ENCODE measurements at regions of chr1 and their contacts with region 1.

Region 1: DNA sequence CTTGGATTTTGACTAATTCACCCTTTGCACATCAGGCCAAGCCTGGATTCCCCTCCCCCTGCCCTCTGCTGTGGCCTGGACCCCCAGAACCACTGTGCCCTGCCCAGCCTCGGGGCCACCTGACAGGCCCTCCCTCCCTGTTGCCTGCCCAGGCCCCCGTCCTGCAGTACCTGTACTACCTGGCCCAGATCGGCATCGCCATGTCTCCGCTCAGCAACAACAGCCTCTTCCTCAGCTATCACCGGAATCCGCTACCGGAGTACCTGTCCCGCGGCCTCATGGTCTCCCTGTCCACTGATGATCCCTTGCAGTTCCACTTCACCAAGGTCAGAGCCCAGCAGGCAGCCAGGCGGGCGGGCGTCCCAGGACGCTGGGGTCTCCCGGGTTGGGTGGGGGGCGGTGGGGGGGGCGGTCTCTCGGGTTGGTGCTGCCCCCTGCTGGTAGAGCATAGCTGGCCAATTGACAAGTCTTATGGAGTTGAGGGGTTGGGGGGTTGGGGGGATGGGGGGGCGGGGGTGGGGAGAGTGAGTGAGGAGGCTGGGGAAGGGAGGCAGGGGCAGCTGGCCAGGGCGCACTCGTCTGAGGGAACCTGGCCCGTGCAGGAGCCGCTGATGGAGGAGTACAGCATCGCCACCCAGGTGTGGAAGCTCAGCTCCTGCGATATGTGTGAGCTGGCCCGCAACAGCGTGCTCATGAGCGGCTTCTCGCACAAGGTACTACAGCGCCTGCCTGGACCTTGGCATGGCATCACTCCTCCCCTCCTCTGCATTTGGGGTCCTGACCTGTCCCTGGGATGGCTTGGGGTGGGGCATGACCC is 10.7 kb downstream of the AMPD2 start:
- DNase-seq: peak; percentile 3
- H3K4me3 ChIP-seq: no peak overlapping the region
- H3K27ac ChIP-seq: no peak overlapping the region
- H3K4me1 ChIP-seq: peaks cover 14% of the 10 kb centered on the region
- H3K27me3 ChIP-seq: no peaks in the 10 kb centered on the region
- CTCF ChIP-seq: peak in 2 of 4 experiments; percentile 7 to 30
- POLR2A ChIP-seq: no peak

Region 2: DNA sequence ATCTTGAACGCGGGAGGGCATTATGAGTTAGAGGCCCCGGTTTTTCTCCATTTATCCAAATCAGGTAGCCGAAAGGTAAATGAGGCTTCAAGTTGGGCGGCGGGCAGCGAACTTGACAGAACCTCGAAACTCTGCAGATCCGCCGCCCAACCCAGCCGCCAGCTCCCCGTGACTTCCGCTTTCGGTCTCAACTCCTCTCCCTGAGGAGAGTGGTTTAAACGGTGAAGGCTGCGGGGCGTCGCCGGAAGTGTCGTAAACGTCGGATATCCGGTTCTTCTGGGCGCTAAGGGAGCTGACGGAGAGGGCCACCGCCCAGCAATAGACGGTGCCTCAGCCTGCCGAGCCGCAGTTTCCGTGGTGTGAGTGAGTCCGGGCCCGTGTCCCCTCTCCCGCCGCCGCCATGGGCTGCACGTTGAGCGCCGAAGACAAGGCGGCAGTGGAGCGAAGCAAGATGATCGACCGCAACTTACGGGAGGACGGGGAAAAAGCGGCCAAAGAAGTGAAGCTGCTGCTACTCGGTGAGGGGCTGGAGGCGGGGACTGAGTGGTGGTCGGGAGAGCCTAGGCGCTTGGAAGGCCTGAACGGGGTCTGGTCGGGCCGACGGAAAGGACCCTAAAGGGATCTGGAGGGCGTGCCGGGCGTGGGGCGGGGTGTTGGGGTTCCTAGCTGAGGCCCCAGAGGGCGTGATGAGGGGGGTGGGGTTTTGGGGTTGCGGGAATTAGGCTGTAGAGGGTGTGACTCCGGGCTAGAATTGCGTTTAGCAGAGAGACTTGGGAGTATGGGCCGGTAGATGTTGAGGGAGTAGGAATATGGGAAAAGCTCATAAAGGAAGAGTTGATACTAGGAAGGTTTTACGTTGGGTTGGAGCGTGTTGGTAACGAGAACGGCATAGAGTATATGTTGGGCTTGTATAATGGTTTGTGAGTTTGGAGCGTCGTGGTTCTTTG is 81.7 kb before region 1 on chr1 and contains the start of gene GNAI3:
- intact Hi-C with region 1: loop called (anchors 5 kb)
- DNase-seq: peak; percentile 97
- H3K4me3 ChIP-seq: peak within 1 kb of the TSS; percentile 71 to 76
- H3K27ac ChIP-seq: peak within 1 kb of the TSS; percentile 95 to 96
- H3K4me1 ChIP-seq: no peaks in the 10 kb centered on the region
- H3K27me3 ChIP-seq: no peaks in the 10 kb centered on the region
- CTCF ChIP-seq: peak in 1 of 4 experiments; percentile 11
- POLR2A ChIP-seq: peak; percentile 99
- total RNA-seq, gene GNAI3: 5.1 to 5.4 TPM

Region 3: DNA sequence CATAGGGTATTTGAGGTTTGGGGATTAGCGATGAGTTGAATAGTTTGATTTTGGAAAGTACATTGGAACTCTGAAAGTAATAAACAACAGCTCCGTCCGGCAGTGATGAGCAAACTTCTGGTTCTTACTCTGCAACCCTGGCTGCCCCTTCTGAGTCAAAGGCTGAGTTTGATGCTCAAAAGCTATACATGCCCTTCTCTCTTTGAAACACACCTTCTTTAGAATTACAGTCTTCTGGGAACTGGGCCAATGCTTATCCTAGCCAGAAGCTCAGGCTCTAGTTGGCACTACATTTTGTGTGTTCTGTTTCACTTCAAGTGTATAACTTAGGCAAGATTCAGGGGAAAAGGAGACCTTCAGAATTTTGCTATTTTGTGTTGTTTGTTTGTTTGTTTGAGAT is 363.6 kb after region 1 on chr1:
- intact Hi-C with region 1: no loop called
- DNase-seq: no peak
- H3K4me3 ChIP-seq: no peak overlapping the region
- H3K27ac ChIP-seq: no peak overlapping the region
- H3K4me1 ChIP-seq: peaks cover 11% of the 10 kb centered on the region
- H3K27me3 ChIP-seq: no peaks in the 10 kb centered on the region
- CTCF ChIP-seq: no peak
- POLR2A ChIP-seq: no peak